Activated CD8-positive, alpha-beta T cell treated with anti-CD3 and anti-CD28 coated beads for 36 hours (primary cell): ENCODE measurements at regions of chr14 and their contacts with region 1.

Region 1: DNA sequence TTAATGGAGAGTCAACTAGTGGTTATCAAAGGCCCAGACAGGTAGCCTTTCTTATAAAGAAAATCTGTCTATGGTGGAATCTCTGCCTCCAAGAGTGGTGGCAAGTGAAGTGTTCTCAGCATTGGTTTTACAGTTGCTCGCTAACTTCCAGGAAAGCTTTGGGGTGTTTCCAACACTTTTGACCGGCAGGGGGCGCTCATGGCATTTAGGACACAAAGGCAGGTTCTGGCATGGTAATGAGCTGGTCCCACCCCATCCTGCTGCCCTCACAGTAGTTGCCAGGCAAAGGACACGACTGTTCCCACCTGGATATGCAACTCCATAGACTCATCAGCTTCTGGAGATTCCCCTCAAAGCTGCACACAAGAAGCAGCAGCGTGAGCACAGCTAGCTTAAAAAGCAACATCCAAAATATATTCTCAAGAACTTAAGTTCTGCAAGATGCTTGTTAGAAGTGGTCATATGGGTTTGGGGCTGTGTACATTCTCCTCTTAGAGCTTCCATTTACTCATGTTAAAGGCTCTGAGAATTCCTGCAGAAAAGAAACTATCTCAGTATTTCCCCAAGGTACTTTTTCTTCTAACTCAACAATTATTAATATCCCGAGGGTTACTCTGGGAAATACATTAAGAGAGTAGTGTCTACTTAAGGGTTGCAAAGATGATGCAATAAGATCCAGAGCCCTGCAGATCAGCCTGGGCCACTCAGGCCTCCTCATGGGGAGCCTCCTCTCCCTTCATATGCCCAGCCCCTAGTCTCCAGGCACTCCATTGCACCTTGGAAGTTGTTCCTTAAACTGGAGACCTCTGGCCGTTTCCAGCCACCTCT is 14.8 kb downstream of the PROX2 start:
- DNase-seq: peak; percentile 97
- ATAC-seq: peak; percentile 83
- H3K4me3 Mint-ChIP-seq: no peak overlapping the region
- H3K27ac Mint-ChIP-seq: no peak overlapping the region
- H3K4me1 Mint-ChIP-seq: peaks cover 5% of the 10 kb centered on the region
- H3K27me3 Mint-ChIP-seq: no peaks in the 10 kb centered on the region
- CTCF ChIP-seq: peak; percentile 91

Region 2: DNA sequence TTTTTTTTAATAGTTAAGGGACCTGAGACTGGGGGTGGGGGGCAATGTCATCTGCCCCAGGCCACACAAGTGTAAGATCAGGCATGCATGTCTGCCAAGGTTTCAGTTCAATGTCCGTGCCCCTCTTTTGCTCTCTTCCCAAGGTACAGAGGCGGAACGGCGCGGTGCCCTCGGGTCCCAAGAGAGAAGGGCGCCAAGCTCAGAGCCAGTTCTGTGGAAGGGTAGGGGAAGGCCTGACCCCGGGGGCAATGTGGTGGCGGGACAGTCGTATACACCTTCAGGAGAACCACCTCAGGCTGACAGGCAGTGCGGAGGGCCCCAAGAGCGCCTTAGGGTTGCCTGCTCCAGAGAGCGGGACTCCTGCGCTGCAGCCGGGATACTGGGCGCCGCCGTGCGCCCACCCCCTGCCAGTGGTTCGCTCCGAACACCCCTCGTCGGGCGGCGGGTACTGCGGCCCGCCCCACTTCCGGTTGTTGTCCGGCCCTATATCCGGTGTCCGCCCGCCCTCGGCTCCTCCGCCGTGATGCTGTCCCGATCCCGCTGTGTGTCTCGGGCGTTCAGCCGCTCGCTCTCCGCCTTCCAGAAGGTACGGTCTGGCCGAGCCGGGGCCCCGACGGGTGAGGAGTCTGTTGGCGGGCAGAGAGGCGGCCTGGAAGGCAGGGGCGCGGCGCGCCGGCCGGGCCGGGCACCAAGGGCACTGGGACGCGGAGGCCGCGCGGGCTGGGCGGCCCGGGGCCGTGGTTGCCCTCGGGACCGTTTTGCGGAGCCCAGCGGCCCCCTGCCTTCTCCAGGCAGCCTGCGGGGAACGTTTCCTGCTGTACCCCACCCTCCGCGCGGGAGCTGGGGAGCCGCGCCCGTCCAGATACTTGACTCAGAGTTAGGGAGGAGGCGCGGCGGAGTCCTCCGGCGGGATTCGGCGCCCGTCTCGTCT is 20.6 kb after region 1 on chr14 and contains the start of gene DLST:
- CTCF ChIA-PET with region 1: interaction called, 334 read pairs
- POLR2A ChIA-PET with region 1: interaction called, 23 read pairs
- intact Hi-C with region 1: no loop called
- DNase-seq: peak; percentile 88
- ATAC-seq: peak; percentile 92
- H3K4me3 Mint-ChIP-seq: peak within 1 kb of the TSS; percentile 96
- H3K27ac Mint-ChIP-seq: peak within 1 kb of the TSS; percentile 91
- H3K4me1 Mint-ChIP-seq: peaks cover 58% of the 10 kb centered on the region
- H3K27me3 Mint-ChIP-seq: no peaks in the 10 kb centered on the region
- CTCF ChIP-seq: no peak
- total RNA-seq, gene DLST: 110 to 113 TPM

Region 3: DNA sequence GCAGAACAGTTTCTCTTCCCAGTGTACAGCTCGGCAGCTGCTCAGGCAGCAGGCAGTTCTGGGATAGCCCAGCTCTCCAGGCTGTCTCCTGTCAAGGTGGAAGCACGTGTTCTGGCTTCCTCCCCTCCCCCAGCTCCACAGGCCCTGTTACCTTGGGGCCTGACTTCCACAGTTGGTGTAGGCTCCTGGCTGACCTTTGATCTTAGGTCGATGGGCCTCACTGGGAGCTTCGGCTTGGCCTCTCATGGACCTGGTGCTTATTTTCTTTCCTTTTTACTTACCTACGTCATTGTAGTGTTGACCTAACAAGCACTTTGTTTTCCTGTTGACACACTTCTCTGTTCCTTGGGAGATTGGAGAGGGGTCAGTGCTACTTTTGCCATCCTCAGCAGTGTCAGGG is 37.6 kb after region 1 on chr14:
- CTCF ChIA-PET with region 1: interaction called, 528 read pairs
- POLR2A ChIA-PET with region 1: interaction called, 4 read pairs
- intact Hi-C with region 1: no loop called
- DNase-seq: no peak
- ATAC-seq: no peak
- H3K4me3 Mint-ChIP-seq: no peak overlapping the region
- H3K27ac Mint-ChIP-seq: peak overlapping the region; percentile 2
- H3K4me1 Mint-ChIP-seq: peaks cover 7% of the 10 kb centered on the region
- H3K27me3 Mint-ChIP-seq: no peaks in the 10 kb centered on the region
- CTCF ChIP-seq: no peak

Region 4: GRCh38 chr14:74922739-74923401 is 61.8 kb after region 1 on chr14 and contains the start of gene RPS6KL1:
- CTCF ChIA-PET with region 1: interaction called, 19 read pairs
- POLR2A ChIA-PET with region 1: no interaction called
- intact Hi-C with region 1: no loop called
- DNase-seq: peak; percentile 88
- ATAC-seq: peak; percentile 99
- H3K4me3 Mint-ChIP-seq: peak within 1 kb of the TSS; percentile 68
- H3K27ac Mint-ChIP-seq: peak within 1 kb of the TSS; percentile 39
- H3K4me1 Mint-ChIP-seq: peaks cover 8% of the 10 kb centered on the region
- H3K27me3 Mint-ChIP-seq: peaks cover 8% of the 10 kb centered on the region
- CTCF ChIP-seq: no peak
- total RNA-seq, gene RPS6KL1: 4.1 to 5.1 TPM

Region 5: DNA sequence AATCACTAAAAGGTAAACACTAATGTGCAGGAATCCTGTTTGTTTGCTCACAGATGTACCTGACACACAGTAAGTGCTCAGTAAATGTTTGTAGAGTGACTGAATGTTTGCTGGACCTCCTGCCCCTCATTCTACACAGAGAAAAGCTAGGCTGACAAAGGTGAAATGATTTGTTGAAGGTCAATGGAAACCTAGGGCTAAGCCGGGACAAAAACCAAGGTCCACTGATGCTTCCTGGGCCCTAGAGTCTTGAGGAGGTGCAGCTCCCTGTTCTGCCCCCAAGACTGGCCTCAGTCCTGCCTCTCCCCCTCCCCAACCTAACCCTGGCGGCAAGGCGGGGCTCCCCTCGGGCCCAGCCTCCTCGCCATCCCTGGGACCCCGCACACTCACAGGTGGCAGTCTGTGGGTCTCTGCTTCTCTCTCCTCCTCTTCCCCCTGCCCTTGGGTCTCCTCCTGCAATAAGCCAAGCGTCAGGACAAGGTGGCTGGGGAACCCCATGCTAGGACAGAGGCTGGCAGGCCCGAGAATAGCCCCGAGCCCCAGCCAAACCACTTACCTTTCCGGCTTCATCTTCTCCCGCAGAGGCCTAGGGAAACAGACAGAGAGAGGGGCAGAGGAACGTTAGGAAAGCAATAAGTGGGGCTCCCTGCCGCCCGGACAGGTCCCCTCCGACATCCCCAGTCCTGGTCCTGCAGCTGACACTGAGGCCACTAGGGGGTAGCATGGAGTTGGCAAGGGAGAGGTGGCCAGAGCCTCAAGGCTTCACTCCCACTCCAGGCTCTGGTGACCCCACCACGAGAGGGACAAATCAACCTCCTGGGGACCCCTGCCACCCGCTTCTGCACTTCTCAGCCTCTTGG is 84.9 kb after region 1 on chr14:
- CTCF ChIA-PET with region 1: interaction called, 27 read pairs
- POLR2A ChIA-PET with region 1: interaction called, 4 read pairs
- intact Hi-C with region 1: no loop called
- DNase-seq: peak; percentile 87
- ATAC-seq: peak; percentile 82
- H3K4me3 Mint-ChIP-seq: no peak overlapping the region
- H3K27ac Mint-ChIP-seq: no peak overlapping the region
- H3K4me1 Mint-ChIP-seq: peaks cover 14% of the 10 kb centered on the region
- H3K27me3 Mint-ChIP-seq: no peaks in the 10 kb centered on the region
- CTCF ChIP-seq: peak; percentile 92

Region 6: DNA sequence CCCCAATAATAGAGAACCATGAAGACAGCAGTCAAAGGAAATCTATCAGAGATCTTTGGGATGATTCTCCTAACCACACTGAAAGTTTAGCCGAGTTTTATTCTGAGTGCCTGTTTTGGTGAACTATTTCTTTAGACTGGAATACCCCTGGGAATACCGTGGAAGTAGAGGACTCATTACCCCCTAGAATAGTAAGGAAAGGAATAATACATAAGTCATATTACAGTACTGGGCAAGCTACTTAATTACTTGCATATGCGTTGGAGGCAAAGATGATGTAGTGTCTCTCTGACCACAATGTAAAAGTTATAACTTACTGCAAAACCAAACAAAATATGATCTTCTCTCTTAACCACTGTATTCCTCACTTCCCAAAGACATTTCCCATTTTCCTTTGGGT is 233.8 kb after region 1 on chr14:
- CTCF ChIA-PET with region 1: interaction called, 55 read pairs
- POLR2A ChIA-PET with region 1: no interaction called
- intact Hi-C with region 1: no loop called
- DNase-seq: no peak
- ATAC-seq: no peak
- H3K4me3 Mint-ChIP-seq: no peak overlapping the region
- H3K27ac Mint-ChIP-seq: no peak overlapping the region
- H3K4me1 Mint-ChIP-seq: no peaks in the 10 kb centered on the region
- H3K27me3 Mint-ChIP-seq: no peaks in the 10 kb centered on the region
- CTCF ChIP-seq: no peak